Activated CD8-positive, alpha-beta T cell treated with anti-CD3 and anti-CD28 coated beads for 36 hours (primary cell): ENCODE measurements at regions of chr1 and their contacts with region 1.

Region 1: GRCh38 chr1:151311589-151312331 is 15.5 kb downstream of the PI4KB start:
- DNase-seq: peak; percentile 93
- ATAC-seq: peak; percentile 100
- H3K4me3 Mint-ChIP-seq: peak overlapping the region; percentile 0
- H3K27ac Mint-ChIP-seq: peak overlapping the region; percentile 97
- H3K4me1 Mint-ChIP-seq: peaks cover 27% of the 10 kb centered on the region
- H3K27me3 Mint-ChIP-seq: no peaks in the 10 kb centered on the region
- CTCF ChIP-seq: no peak

Region 2: DNA sequence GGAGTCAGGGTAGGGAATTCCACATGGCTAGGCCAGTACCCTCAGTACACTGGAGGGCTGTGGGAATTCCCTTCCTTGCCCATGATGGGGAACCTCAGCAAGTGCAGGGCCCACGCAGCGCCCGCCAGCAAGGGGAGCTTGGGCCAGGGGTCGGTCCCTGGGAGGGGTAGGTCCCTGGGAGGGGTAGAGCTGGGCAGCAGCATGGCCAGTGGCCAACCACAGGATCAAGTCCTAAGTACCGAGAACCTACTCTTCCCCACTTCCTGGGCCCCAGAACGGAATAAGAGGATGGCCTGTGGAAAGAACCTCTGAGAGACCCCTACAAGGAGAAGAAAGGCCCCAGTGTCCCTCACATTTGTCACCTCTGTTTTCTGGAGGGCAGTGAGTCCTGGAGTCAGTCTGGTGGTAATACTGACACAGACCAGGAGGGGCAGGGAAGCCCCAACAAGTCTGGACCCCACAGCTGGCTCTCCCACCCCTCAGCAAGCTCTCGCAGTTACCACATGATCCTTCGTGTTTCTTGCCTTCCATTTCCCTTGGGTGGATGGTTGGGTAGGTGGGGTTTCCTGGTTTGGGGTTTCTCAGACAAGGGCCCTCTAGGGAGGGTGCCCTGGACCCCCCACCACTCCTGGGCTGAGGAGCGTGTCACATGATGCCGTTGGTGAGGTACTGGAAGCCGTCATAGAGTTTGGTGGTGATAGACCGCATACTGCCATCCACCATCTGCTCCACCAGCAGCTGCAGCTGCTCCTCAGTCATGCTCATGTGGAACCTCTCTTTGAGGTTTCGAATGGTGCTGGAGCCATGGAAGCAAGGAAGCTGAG is 19.3 kb before region 1 on chr1:
- CTCF ChIA-PET with region 1: interaction called, 79 read pairs
- POLR2A ChIA-PET with region 1: interaction called, 24 read pairs
- intact Hi-C with region 1: no loop called
- DNase-seq: peak; percentile 30
- ATAC-seq: peak; percentile 52
- H3K4me3 Mint-ChIP-seq: no peak overlapping the region
- H3K27ac Mint-ChIP-seq: peak overlapping the region; percentile 71
- H3K4me1 Mint-ChIP-seq: peaks cover 2% of the 10 kb centered on the region
- H3K27me3 Mint-ChIP-seq: no peaks in the 10 kb centered on the region
- CTCF ChIP-seq: peak; percentile 27

Region 3: DNA sequence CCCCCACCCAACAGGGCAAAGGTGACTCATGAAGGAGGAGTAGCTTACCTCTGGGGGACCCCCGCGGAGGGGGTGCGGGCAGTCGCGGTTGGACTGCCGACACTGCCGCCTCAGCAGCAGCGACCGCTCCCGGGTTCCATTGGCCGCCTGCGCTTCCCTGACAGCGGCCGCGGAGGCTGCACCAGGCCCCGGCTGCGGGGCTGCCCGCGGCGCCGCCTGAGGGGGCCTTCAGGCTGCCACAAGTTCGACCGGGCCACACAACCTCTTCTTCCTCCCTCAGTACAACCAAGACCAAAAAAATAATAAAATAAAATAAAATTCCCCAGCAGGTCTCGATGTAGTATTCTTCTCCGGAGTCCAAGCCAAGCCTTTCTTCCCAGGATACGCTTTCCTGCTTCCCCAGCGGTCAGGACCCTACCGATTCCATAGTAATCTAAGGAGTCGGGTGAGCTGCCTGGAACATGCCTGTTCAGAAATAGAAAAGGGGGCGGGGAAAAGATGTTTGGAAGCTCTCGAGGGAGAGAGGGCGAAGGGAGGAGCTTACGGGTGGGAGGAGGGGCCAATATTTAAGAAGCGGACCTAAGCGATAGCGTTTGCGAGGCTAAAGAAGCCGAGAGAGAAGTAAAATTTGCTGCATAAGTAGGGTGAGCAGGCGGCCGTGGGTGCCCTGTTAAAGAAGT is 15.6 kb after region 1 on chr1 and contains the start of gene PI4KB:
- CTCF ChIA-PET with region 1: interaction called, 4 read pairs
- POLR2A ChIA-PET with region 1: interaction called, 120 read pairs
- intact Hi-C with region 1: no loop called
- DNase-seq: peak; percentile 97
- ATAC-seq: peak; percentile 94
- H3K4me3 Mint-ChIP-seq: peak within 1 kb of the TSS; percentile 84
- H3K27ac Mint-ChIP-seq: peak within 1 kb of the TSS; percentile 96
- H3K4me1 Mint-ChIP-seq: peaks cover 29% of the 10 kb centered on the region
- H3K27me3 Mint-ChIP-seq: no peaks in the 10 kb centered on the region
- CTCF ChIP-seq: no peak
- total RNA-seq, gene PI4KB: 46.6 to 47.3 TPM